Activated CD4-positive, alpha-beta memory T cell treated with anti-CD3 and anti-CD28 coated beads, Interleukin-2, amount 10 ng/mL, durations not matched to agents 7 days and 5 days (primary cell): ENCODE measurements at regions of chr1 and their contacts with region 1.

Region 1: DNA sequence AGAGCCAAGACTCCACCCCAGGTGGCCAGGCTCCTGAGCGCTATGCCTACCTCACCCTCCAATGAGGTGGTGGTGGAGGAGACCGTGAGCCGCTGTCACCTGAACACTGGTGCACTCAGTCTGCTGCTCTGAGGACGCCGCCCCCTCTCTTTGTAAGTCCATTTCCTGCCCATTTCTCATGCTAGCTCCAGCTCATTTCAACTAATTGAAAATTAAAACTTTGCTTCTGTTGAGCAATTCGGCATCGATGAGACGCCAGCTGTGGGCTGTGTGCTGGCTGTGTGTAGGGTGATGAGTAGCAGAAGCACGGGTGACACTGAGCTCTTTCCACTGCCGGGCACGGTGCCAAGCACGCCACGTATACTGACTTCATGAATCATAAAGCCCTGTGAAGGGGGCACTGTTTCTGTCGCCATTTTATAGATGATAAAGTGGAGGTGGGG is 11.2 kb downstream of the TNFRSF1B start:
- DNase-seq: peak; percentile 81
- H3K4me3 Mint-ChIP-seq: peak overlapping the region; percentile 68
- H3K27ac Mint-ChIP-seq: peak overlapping the region; percentile 94
- H3K4me1 Mint-ChIP-seq: peaks cover 91% of the 10 kb centered on the region
- H3K27me3 Mint-ChIP-seq: no peaks in the 10 kb centered on the region

Region 2: GRCh38 chr1:12161662-12162458 is 16.2 kb before region 1 on chr1:
- CTCF ChIA-PET with region 1: interaction called, 20 read pairs
- POLR2A ChIA-PET with region 1: interaction called, 918 read pairs
- DNase-seq: peak; percentile 90
- H3K4me3 Mint-ChIP-seq: peak overlapping the region; percentile 49
- H3K27ac Mint-ChIP-seq: peak overlapping the region; percentile 98
- H3K4me1 Mint-ChIP-seq: peaks cover 86% of the 10 kb centered on the region
- H3K27me3 Mint-ChIP-seq: no peaks in the 10 kb centered on the region

Region 3: DNA sequence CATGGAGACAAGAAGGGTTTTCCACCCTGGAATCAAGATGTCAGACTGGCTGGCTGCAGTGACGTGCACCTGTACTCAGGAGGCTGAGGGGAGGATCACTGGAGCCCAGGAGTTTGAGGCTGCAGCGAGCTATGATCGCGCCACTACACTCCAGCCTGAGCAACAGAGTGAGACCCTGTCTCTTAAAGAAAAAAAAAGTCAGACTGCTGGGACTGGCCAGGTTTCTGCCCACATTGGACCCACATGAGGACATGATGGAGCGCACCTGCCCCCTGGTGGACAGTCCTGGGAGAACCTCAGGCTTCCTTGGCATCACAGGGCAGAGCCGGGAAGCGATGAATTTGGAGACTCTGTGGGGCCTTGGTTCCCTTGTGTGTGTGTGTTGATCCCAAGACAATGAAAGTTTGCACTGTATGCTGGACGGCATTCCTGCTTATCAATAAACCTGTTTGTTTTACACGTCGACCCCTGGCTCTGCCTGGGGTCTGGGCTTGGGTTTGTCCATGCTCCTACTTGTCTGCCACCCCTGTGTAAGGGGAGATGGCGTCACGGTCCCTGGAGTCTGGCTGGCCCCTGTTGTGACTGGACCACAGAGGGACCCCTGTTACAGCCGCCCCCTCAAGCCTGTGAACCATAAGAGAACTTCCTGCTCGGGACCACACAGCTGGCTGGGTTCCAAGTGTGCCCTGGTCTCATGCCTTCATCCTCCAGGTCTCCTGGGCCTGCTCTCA is 30.9 kb after region 1 on chr1:
- CTCF ChIA-PET with region 1: interaction called, 5 read pairs
- POLR2A ChIA-PET with region 1: interaction called, 17 read pairs
- DNase-seq: peak; percentile 85
- H3K4me3 Mint-ChIP-seq: peak overlapping the region; percentile 20
- H3K27ac Mint-ChIP-seq: peak overlapping the region; percentile 68
- H3K4me1 Mint-ChIP-seq: peaks cover 66% of the 10 kb centered on the region
- H3K27me3 Mint-ChIP-seq: peaks cover 5% of the 10 kb centered on the region

Region 4: GRCh38 chr1:12486401-12487005 is 308.5 kb after region 1 on chr1:
- CTCF ChIA-PET with region 1: no interaction called
- POLR2A ChIA-PET with region 1: no interaction called
- DNase-seq: no peak
- H3K4me3 Mint-ChIP-seq: no peak overlapping the region
- H3K27ac Mint-ChIP-seq: no peak overlapping the region
- H3K4me1 Mint-ChIP-seq: peaks cover under 1% of the 10 kb centered on the region
- H3K27me3 Mint-ChIP-seq: no peaks in the 10 kb centered on the region